Pancreas (tissue), 10 donors: ENCODE measurements at regions of chr19 and their contacts with region 1.

Region 1: DNA sequence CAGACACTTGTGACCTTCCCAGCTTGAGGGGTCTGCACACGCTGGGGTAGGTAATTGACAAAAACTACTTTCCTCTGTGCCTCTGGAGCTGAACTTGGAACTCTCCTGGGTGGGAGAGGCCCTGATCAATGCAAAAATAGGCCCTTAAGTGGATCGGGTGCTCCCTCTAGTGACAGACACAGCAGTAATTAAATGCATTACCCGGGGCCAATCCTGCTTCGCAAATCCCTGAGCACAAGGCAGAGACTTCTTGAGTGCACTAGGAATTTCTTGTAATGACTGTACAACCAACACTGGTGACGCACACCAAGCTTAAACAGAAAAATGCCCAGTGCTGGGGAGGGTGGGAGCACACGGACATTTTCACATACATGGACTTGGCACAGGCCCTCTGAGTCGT is 10.6 kb upstream of the UBE2S start:
- DNase-seq: peak in 3 of 6 donors; percentile 40 to 68 (median 45)
- ATAC-seq: peak; percentile 75 to 99 (median 94)
- H3K4me3 ChIP-seq: no peak overlapping the region
- H3K27ac ChIP-seq: no peak overlapping the region
- H3K4me1 ChIP-seq: no peaks in the 10 kb centered on the region
- H3K27me3 ChIP-seq: no peaks in the 10 kb centered on the region
- CTCF ChIP-seq: peak in 2 of 4 donors; percentile 36 to 55

Region 2: DNA sequence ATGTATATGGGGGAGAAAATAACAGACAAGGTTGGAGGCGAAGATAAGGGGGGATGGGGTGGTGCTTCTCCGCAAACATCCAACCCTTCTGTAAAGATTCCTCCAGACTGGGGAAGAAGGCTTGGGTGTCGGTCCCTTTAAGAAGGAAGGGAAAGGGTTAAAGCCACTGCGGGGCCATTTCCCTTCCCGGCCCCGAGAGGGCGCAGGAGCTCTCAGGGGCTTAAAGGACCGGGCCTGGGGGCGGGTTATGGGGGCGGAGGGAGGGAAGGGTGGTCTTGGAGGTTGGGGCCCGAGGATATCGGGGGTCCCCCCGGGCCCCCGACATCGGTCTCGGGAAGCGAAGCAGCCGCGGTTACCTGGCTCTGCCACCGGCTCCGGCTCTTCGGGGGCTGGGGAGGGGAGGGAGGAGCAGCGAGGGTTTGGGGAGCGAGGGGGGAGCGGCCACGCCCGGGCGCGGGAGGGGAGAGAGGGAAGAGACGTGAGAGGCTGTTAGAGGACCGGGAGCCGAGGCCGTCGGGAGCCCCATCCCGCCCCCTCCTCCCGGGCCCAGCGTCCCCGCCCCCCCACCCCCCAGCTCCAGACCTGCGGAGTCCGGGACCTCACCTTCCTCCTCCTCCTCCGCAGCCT is 272.0 kb before region 1 on chr19:
- intact Hi-C with region 1: loop called in 2 of 3 experiments (anchors 5 to 10 kb)
- DNase-seq: no peak
- ATAC-seq: peak in 1 of 4 donors; percentile 19
- H3K4me3 ChIP-seq: no peak overlapping the region
- H3K27ac ChIP-seq: no peak overlapping the region
- H3K4me1 ChIP-seq: no peaks in the 10 kb centered on the region
- H3K27me3 ChIP-seq: peaks cover 0 to 22% (median 4%) of the 10 kb centered on the region in 4 donors
- CTCF ChIP-seq: no peak

Region 3: DNA sequence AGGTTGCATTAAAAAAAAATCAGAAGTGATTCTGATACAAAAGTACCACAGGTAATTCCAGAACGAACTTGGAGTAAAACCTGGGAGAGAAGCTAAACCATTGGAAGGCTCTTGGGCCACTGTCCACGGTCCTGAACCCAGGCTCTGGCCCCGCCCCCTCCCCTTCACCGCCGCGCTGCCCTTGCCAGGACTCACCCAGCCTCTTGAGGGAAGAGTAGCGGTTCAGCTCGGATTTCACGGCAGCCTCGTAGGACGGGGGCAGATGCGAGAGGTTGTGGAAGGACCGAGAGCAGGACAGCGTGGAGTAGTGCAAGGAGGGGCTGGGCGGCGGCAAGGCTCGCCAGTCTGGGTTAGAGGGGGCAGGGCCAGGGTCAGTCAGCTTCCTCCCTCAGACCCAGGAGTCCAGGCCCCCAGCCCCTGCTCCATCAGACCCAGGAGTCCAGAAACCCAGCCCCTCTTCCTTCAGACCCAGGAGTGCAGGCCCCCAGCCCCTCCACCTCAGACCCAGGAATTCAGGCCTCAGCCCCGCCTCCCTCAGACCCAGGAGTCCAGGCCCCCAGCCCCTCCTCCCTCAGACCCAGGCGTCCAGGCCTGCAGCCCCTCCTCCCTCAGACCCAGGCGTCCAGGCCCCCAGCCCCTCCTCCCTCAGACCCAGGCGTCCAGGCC is 19.4 kb after region 1 on chr19:
- intact Hi-C with region 1: no loop called
- DNase-seq: peak in 5 of 6 donors; percentile 31 to 79 (median 69)
- ATAC-seq: peak; percentile 78 to 98 (median 87)
- H3K4me3 ChIP-seq: no peak overlapping the region
- H3K27ac ChIP-seq: no peak overlapping the region
- H3K4me1 ChIP-seq: no peaks in the 10 kb centered on the region
- H3K27me3 ChIP-seq: peaks cover 0 to 17% (median 4%) of the 10 kb centered on the region in 4 donors
- CTCF ChIP-seq: no peak